A549 (cell line): ENCODE measurements at regions of chr1 and their contacts with region 1.

Region 1: GRCh38 chr1:180881806-180882509 is 30.7 kb upstream of the KIAA1614 start:
- DNase-seq: peak; percentile 49 to 51
- ATAC-seq: peak; percentile 84 to 85
- H3K4me3 ChIP-seq: no peak overlapping the region
- H3K27ac ChIP-seq: no peak overlapping the region
- H3K4me1 ChIP-seq: peaks cover 14% of the 10 kb centered on the region; the same call in 2 of the 3 replicates
- CTCF ChIP-seq: peak; percentile 76
- EP300 ChIP-seq: no peak
- POLR2A ChIP-seq: no peak
- RAD21 ChIP-seq: peak; percentile 78 to 79

Region 2: GRCh38 chr1:181159451-181160140 is 277.6 kb after region 1 on chr1:
- CTCF ChIA-PET with region 1: interaction called, 13 read pairs
- POLR2A ChIA-PET with region 1: no interaction called
- DNase-seq: no peak
- ATAC-seq: peak in 1 of 2 experiments; percentile 56; a peak in 2 of 6 replicates
- H3K4me3 ChIP-seq: no peak overlapping the region
- H3K27ac ChIP-seq: 0 out of 6 replicates have a peak overlapping the region, but pooled peaks of 1 of the 2 experiments have one; percentile 3
- H3K4me1 ChIP-seq: peaks cover 4% of the 10 kb centered on the region; the same call in 2 of the 3 replicates
- CTCF ChIP-seq: no peak
- EP300 ChIP-seq: no peak
- POLR2A ChIP-seq: no peak
- RAD21 ChIP-seq: no peak

Region 3: GRCh38 chr1:181166377-181167196 is 284.6 kb after region 1 on chr1:
- CTCF ChIA-PET with region 1: interaction called, 88 read pairs
- POLR2A ChIA-PET with region 1: no interaction called
- DNase-seq: peak; percentile 72 to 80
- ATAC-seq: peak; percentile 96 to 100
- H3K4me3 ChIP-seq: no peak overlapping the region
- H3K27ac ChIP-seq: peak overlapping the region in 1 of 2 experiments; percentile 52; a peak in 1 of 6 replicates
- H3K4me1 ChIP-seq: no peaks in the 10 kb centered on the region
- CTCF ChIP-seq: peak; percentile 95
- EP300 ChIP-seq: no peak
- POLR2A ChIP-seq: no peak
- RAD21 ChIP-seq: peak; percentile 83 to 97